ENCODE measurements at regions of chr1 and their contacts with region 1.

Region 1: GRCh38 chr1:145782166-145783099 is 41.5 kb downstream of the RNF115 start:
- DNase-seq: no peak
- ATAC-seq: no peak
- H3K4me3 ChIP-seq: no peak overlapping the region
- H3K4me3 Mint-ChIP-seq: no peak overlapping the region
- H3K27ac ChIP-seq: no peak overlapping the region
- H3K27ac Mint-ChIP-seq: no peak overlapping the region
- H3K4me1 ChIP-seq: peaks cover 0 to 15% of the 10 kb centered on the region in 2 experiments
- H3K4me1 Mint-ChIP-seq: peaks cover 21 to 30% (median 24%) of the 10 kb centered on the region in 3 donors
- H3K27me3 ChIP-seq: no peaks in the 10 kb centered on the region
- H3K27me3 Mint-ChIP-seq: no peaks in the 10 kb centered on the region

Region 2: GRCh38 chr1:145751491-145752037 is 30.9 kb before region 1 on chr1:
- CTCF ChIA-PET with region 1: no interaction called
- POLR2A ChIA-PET with region 1: interaction called in 1 of 2 experiments, 10 read pairs
- DNase-seq: no peak
- ATAC-seq: no peak
- H3K4me3 ChIP-seq: no peak overlapping the region
- H3K4me3 Mint-ChIP-seq: no peak overlapping the region
- H3K27ac ChIP-seq: no peak overlapping the region
- H3K27ac Mint-ChIP-seq: no peak overlapping the region
- H3K4me1 ChIP-seq: no peaks in the 10 kb centered on the region
- H3K4me1 Mint-ChIP-seq: no peaks in the 10 kb centered on the region
- H3K27me3 ChIP-seq: no peaks in the 10 kb centered on the region
- H3K27me3 Mint-ChIP-seq: no peaks in the 10 kb centered on the region

Region 3: DNA sequence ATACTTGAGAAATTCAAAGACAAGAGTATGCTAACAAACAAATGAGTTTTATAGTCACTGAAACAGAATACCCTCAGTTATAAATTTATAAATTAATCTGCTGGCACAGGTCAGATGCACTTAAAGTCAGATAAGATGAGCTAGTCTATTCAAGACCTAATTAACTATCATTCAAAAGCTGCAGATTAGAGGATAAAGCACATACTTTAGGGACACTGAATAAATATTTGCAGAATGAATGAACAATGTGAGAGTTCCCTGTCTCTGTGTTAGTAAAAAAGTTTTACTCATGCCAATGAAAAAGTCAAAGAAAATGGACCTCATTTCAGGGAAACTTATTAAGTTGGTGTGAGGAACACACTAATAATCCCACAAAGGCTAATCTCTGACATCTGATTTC is 16.9 kb before region 1 on chr1:
- CTCF ChIA-PET with region 1: no interaction called
- POLR2A ChIA-PET with region 1: no interaction called
- DNase-seq: no peak
- ATAC-seq: no peak
- H3K4me3 ChIP-seq: no peak overlapping the region
- H3K4me3 Mint-ChIP-seq: no peak overlapping the region
- H3K27ac ChIP-seq: no peak overlapping the region
- H3K27ac Mint-ChIP-seq: no peak overlapping the region
- H3K4me1 ChIP-seq: no peaks in the 10 kb centered on the region
- H3K4me1 Mint-ChIP-seq: no peaks in the 10 kb centered on the region
- H3K27me3 ChIP-seq: no peaks in the 10 kb centered on the region
- H3K27me3 Mint-ChIP-seq: no peaks in the 10 kb centered on the region

Region 4: DNA sequence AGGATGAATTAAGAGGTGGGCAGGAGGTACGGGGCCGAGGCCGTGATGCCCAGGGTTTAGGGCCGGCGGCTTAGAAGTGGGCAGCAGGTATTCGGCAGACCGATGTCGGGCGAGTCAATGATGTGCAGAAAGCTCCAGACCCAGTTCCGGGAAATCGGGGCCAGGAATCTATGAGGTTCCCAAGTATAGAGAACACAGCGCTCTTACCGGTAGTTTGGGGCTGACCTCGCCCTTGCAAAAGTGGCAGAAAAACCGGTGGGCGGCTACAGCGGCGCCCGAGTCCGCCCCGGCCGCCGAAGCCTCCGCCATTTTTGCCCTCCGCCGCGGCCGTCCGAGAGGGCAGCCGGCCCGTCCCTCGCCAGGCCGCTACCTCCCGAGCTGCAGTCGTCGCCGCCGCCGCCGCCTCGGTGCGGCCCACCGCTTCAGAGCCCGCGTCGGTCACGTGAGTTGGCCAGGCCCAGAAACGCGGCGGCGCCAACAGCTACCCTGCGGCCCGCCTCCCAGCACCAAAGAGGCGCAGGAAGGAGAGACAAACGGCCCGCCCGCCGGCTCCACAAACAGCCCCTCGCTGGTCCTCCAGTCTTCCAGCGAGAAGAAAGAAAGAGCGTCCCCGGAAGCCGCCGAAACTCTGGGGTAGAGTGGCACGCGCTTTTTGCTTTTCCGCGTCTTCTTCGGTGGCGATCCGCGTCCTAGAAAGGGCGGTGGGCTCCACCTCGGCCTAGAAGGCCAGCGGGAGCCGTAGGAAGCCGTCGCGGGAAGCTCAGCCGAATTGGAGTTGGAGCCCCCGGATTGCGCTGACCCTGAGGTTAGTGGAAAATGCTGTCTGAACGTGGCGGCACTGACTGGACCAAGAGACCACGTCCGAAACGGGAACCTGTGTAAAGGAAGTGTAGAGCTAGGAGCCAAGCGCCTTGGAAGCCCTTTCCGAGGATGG is 41.4 kb after region 1 on chr1 and contains the starts of genes POLR3C and RNF115:
- CTCF ChIA-PET with region 1: no interaction called
- POLR2A ChIA-PET with region 1: interaction called in 1 of 2 experiments, 13 read pairs
- DNase-seq: peak; percentile 78 to 92 (median 85)
- ATAC-seq: peak; percentile 96 to 98 (median 98)
- H3K4me3 ChIP-seq: peak within 1 kb of the TSS; percentile 97 to 99
- H3K4me3 Mint-ChIP-seq: peak within 1 kb of the TSS; percentile 98
- H3K27ac ChIP-seq: peak within 1 kb of the TSS; percentile 70
- H3K27ac Mint-ChIP-seq: peak within 1 kb of the TSS; percentile 96
- H3K4me1 ChIP-seq: peaks cover 14 to 20% of the 10 kb centered on the region in 2 experiments
- H3K4me1 Mint-ChIP-seq: peaks cover 25 to 38% (median 32%) of the 10 kb centered on the region in 3 donors
- H3K27me3 ChIP-seq: no peaks in the 10 kb centered on the region
- H3K27me3 Mint-ChIP-seq: no peaks in the 10 kb centered on the region
- total RNA-seq, gene POLR3C: 24.5 to 42.0 (median 38.2) TPM
- total RNA-seq, gene RNF115: 12.0 to 17.5 (median 13.4) TPM

Measured in T-cell (primary cell).